Posterior cingulate gyrus (tissue), 11 donors: ENCODE measurements at regions of chr1 and their contacts with region 1.

Region 1: GRCh38 chr1:45410850-45411314 is 70.6 kb upstream of the MUTYH start:
- DNase-seq: no peak

Region 2: GRCh38 chr1:45205910-45206721 is 204.8 kb before region 1 on chr1 and contains the start of gene ZSWIM5:
- intact Hi-C with region 1: no loop called
- DNase-seq: peak; percentile 60 to 96 (median 72)

Region 3: DNA sequence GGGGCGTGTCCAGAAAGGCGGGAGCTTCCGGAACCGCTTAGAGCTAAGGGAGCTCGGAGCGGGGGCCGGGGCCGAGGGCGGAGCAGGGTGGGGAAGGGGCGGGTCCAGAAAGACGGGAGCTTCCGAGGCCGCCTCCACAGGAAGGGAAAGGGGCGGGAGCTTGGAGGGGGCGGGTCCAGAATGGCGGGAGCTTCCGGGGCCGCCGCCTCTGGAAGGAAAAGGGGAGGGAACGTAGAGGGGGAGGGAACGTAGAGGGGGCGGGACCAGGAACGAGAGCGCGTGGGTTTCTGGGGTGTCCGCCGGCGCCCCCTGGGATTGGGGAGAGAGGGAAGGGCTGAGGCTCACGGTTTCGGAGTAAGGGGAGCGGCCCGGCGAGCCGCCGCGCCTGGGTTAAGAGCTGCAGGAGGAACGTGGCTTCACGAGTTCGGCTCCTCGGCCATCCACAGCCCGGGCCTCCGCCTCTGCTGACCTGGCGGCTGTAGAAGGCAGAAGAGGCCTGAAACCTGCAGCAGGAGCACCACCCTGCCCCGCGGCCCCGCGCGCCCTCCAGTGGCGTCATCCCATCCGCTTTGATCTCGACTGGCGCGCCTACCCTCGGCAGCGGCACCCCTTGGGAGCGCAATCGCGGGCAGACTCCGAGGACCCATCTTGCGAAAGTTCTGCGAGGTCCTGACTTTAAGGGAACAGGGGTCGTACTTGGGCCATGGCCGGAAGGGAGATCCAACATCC is 107.1 kb before region 1 on chr1:
- intact Hi-C with region 1: no loop called
- DNase-seq: peak; percentile 95 to 99 (median 98)

Region 4: GRCh38 chr1:45470306-45470798 is 59.5 kb after region 1 on chr1:
- intact Hi-C with region 1: loop called (anchors 10 kb)
- DNase-seq: no peak

Region 5: GRCh38 chr1:45490626-45491486 is 80.0 kb after region 1 on chr1 and contains the start of gene TESK2:
- intact Hi-C with region 1: no loop called
- DNase-seq: peak; percentile 95 to 100 (median 98)